ENCODE measurements at regions of chr11 and their contacts with region 1.

Region 1: GRCh38 chr11:72585762-72586311 is 88.4 kb downstream of the PDE2A start:
- DNase-seq: peak; percentile 44
- ATAC-seq: peak; percentile 85
- H3K4me3 ChIP-seq: no peak overlapping the region
- H3K27ac ChIP-seq: no peak overlapping the region
- H3K4me1 ChIP-seq: no peaks in the 10 kb centered on the region; the same call in 1 of the 2 replicates
- H3K27me3 ChIP-seq: peaks cover 98% of the 10 kb centered on the region
- CTCF ChIP-seq: peak; percentile 78
- POLR2A ChIP-seq: no peak
- RAD21 ChIP-seq: peak; percentile 75

Region 2: GRCh38 chr11:72683782-72684200 is 98.0 kb after region 1 on chr11:
- CTCF ChIA-PET with region 1: interaction called, 4 read pairs
- POLR2A ChIA-PET with region 1: no interaction called
- dilution Hi-C with region 1: no loop called
- in situ Hi-C with region 1: loop called (anchors 5 kb)
- intact Hi-C with region 1: loop called (anchors 1 kb)
- DNase-seq: peak; percentile 19
- ATAC-seq: peak; percentile 77
- H3K4me3 ChIP-seq: no peak overlapping the region
- H3K27ac ChIP-seq: no peak overlapping the region
- H3K4me1 ChIP-seq: peaks cover 2% of the 10 kb centered on the region; the same call in 1 of the 2 replicates
- H3K27me3 ChIP-seq: peaks cover 8% of the 10 kb centered on the region; the same call in 1 of the 2 replicates
- CTCF ChIP-seq: peak; percentile 77
- POLR2A ChIP-seq: no peak
- RAD21 ChIP-seq: peak; percentile 76